Thyroid gland (tissue), 4 donors: ENCODE measurements at regions of chr5 and their contacts with region 1.

Region 1: DNA sequence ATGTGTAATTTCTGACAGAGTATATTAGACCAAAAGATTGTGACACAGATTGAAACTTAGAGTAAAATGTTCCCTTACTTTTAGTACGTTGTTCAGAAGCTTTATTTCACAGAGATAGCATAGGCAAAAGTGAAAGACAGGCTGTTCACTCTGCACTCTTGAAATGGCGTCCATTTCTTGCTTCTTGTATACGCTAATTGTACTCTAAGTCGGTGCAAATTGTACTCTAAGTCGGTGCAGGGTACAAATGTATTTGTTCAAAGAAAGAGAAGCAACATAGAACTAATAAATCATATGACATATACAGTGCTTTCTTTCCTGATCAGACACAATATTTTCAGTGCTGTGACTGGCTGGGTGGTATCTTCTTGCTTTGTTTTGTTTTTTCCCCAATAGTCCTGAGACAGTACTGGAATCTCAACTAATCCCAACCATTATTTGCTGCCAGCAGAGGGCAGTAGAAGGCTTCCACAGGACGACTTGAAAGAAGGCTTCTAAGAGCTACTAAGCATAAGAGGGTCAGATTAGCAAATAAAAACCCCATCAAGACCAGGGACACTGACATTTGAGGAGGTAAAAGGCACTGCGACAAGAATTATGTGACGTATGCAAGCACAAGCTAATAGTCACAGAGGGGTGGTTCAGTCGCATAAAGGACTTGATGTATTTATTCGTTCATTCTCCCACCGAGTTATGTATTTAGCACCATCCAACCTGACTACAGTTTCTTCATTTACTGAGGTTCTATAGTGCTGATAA is 831.8 kb downstream of the TAF11L14 start:
- DNase-seq: peak; percentile 67 to 76
- H3K4me3 ChIP-seq: no peak overlapping the region
- H3K27ac ChIP-seq: no peak overlapping the region
- H3K4me1 ChIP-seq: no peaks in the 10 kb centered on the region
- H3K27me3 ChIP-seq: no peaks in the 10 kb centered on the region
- CTCF ChIP-seq: peak; percentile 35 to 76 (median 68)
- POLR2A ChIP-seq: no peak

Region 2: DNA sequence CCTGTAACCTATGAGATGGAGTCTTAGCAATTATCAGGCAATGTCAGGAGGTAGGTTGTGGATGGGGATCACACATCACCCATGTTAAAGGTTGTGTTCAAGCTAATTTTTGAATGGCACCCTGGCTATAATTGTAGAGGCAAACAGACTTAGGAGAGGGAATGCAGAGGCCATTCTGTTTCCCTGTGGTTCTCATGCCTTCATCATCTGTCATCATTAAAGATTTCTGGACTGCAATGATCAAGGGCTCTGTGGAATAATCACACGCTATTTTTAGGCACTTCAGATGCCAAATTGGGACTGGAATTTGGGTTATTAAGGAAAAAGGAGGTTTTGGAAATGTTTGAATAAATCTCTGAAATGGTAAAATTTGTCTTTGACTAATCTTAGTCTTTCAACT is 233.7 kb after region 1 on chr5:
- intact Hi-C with region 1: loop called (anchors 2 kb)
- DNase-seq: no peak
- H3K4me3 ChIP-seq: no peak overlapping the region
- H3K27ac ChIP-seq: no peak overlapping the region
- H3K4me1 ChIP-seq: peaks cover 2 to 5% of the 10 kb centered on the region in 2 donors
- H3K27me3 ChIP-seq: no peaks in the 10 kb centered on the region
- CTCF ChIP-seq: no peak
- POLR2A ChIP-seq: no peak